Brain microvascular endothelial cell (primary cell): ENCODE measurements at regions of chr17 and their contacts with region 1.

Region 1: GRCh38 chr17:73192894-73193701 is at the start of gene COG1:
- DNase-seq: peak; percentile 64
- H3K4me3 ChIP-seq: peak within 1 kb of the TSS; percentile 95
- H3K27ac ChIP-seq: peak within 1 kb of the TSS; percentile 91
- H3K27me3 ChIP-seq: no peaks in the 10 kb centered on the region
- CTCF ChIP-seq: no peak

Region 2: DNA sequence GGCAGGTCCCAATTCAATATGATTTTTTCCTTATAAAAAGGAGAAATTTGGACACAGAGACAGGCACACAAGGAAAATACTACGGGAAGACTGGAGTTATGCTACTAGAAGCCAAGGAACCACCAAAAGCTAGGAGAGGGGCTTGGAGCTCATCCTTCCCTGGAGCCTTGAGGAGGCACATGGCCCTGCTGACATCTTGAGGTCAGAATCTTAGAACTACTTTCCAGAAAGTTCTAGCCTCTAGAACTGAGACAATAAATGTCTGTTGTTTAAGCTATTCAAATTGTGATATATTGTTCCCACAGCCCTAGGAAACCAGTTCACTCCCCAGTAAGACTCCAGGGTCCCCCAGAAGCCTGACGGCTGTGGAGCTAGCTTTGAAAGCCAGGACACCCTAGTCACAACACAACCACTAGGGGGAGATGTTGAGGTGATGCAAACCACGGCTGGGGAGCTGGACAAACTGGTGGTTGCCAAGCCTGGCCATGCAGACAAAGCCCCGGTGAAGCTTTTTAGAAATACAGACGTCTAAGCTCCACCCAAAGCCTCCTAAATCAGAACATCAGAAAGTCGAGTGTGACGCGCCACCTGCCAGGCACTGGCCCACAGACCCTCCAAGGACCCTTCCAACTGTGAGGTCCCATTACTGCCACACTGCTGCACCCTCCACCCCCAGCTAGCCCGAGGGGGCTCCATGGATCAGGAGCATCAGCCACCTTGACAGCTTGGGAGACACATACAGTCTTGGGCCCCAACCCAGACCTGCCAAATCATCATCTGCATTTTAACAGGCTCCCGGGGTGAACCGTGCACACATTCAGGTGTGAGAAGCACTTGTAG is 207.0 kb before region 1 on chr17:
- in situ Hi-C with region 1: loop called (anchors 25 kb)
- DNase-seq: peak; percentile 74
- H3K4me3 ChIP-seq: no peak overlapping the region
- H3K27ac ChIP-seq: no peak overlapping the region
- H3K27me3 ChIP-seq: no peaks in the 10 kb centered on the region
- CTCF ChIP-seq: peak; percentile 94

Region 3: DNA sequence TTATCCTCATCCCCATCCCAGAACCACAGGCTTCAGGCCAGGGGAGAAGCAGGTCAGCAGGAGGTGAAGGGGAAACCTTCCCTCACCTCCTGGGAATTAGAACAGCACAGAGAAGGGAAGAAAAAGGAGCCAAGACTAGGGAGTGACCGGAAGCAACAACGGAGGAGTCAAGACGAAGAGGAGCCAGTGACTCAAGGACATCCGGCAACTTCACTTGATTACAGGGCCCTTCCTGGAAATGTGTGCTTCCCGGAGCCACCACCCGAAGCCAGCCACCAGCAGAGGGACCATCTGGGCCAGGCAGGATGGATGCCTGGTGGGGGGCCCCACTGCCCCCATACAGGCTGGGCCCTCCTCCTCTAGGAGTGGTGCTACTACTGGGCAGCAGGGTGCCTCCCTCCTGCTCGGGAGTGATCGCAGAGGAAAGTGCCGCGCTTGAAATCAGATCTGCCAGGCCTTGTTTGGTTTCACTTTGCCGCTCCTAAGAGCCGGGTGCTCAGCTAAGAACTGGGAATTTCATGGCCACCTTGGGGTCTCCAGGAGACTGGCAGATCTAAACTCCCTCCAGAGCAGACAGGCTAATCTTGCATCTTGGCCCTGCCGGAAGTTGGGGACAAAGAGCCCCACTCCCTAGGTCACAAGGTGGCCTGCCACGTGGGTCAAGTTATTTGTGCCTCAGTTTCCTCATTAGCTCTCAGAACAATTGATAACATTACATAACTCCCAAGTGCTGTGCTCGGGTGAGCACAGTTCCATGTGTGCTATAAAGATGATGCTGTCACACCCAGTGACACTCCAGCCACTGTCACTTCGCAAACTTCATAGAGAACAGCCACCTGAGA is 112.1 kb after region 1 on chr17:
- in situ Hi-C with region 1: no loop called
- DNase-seq: peak; percentile 70
- H3K4me3 ChIP-seq: peak overlapping the region; percentile 45
- H3K27ac ChIP-seq: peak overlapping the region; percentile 82
- H3K27me3 ChIP-seq: no peaks in the 10 kb centered on the region
- CTCF ChIP-seq: peak; percentile 60